PC-3 (cell line): ENCODE measurements at regions of chr3 and their contacts with region 1.

Region 1: GRCh38 chr3:9249273-9250192 is at the start of gene SRGAP3:
- DNase-seq: peak; percentile 97
- ATAC-seq: peak; percentile 93
- H3K4me3 ChIP-seq: peak within 1 kb of the TSS; percentile 77
- H3K27ac ChIP-seq: peak within 1 kb of the TSS; percentile 39
- H3K4me1 ChIP-seq: peaks cover 45% of the 10 kb centered on the region
- H3K27me3 ChIP-seq: no peaks in the 10 kb centered on the region
- CTCF ChIP-seq: peak; percentile 32; the same call in 1 of the 2 replicates
- total RNA-seq, gene SRGAP3: 7.5 and 9.6 TPM in 2 replicates

Region 2: DNA sequence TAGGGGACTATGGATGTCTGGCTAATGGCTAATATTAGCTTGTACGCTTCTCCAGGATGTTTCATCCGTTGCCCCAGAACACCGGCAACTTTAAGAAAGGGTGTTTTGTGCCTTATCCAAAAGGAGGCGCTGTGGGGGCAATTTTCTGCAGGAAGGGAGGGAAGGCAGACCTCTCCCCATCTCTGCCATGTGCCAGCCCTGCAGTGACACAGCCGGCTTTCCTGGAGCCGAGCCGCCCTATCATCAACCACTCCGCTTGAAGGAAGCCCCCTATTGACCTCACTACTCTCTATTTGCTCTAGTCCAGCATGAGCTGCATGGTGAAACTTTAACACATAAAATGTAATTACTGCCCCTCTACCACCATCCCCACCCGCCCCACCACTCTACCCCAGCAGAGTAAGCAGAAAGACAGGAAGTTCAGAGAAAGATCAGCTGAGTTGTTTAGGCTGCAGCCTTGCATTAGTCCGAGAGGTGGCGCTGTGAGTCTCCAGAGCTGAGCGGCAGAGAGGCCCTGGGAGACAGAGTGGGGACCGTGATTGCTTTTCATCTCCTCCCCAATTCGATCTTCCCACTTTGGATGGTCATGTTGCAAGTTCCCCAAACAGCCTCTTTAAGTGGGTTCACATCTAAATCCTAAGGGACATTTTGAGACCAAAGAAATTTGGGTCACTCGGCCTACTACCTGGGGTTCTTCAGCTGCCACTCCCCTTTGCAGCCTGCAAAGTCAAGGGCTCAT is 261.7 kb before region 1 on chr3:
- CTCF ChIA-PET with region 1: no interaction called
- POLR2A ChIA-PET with region 1: no interaction called
- intact Hi-C with region 1: loop called (anchors 1 kb)
- DNase-seq: peak; percentile 75
- ATAC-seq: peak; percentile 89
- H3K4me3 ChIP-seq: no peak overlapping the region
- H3K27ac ChIP-seq: no peak overlapping the region
- H3K4me1 ChIP-seq: no peaks in the 10 kb centered on the region
- H3K27me3 ChIP-seq: no peaks in the 10 kb centered on the region
- CTCF ChIP-seq: peak; percentile 95

Region 3: DNA sequence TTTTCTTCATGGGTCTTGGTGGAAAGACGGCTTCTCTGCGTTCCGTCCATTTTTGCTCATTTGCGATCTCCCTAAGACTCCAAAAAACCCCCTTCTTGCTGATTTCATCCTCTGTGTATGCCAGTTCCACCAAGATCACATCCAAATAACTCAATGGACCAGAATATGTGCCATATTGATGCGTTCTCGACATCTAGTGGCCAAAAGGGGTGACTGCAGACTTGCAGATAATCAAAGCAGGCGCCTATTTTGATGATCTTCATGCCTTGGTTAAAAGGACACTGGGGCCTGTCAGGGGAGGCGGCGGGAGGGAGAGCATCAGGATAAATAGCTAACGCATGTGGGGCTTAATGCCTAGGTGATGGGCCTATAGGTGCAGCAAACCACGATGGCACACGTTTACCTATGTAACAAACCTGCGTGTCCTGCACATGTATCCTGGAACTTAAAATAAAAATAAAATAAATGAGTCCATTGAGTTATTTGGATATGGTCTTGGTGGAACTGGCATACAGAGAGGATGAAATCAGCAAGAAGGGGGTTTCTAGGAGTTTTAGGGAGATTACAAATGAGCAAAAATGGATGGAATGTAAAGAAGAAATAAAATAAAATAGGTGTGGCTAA is 182.1 kb before region 1 on chr3:
- CTCF ChIA-PET with region 1: no interaction called
- POLR2A ChIA-PET with region 1: no interaction called
- intact Hi-C with region 1: loop called (anchors 5 kb)
- DNase-seq: peak; percentile 78
- ATAC-seq: peak; percentile 94
- H3K4me3 ChIP-seq: no peak overlapping the region
- H3K27ac ChIP-seq: no peak overlapping the region
- H3K4me1 ChIP-seq: no peaks in the 10 kb centered on the region
- H3K27me3 ChIP-seq: no peaks in the 10 kb centered on the region
- CTCF ChIP-seq: peak; percentile 97

Region 4: GRCh38 chr3:9194508-9195184 is 54.9 kb before region 1 on chr3:
- CTCF ChIA-PET with region 1: interaction called, 3 read pairs
- POLR2A ChIA-PET with region 1: no interaction called
- intact Hi-C with region 1: loop called (anchors 1 kb)
- DNase-seq: peak; percentile 83
- ATAC-seq: peak; percentile 94
- H3K4me3 ChIP-seq: no peak overlapping the region
- H3K27ac ChIP-seq: peak overlapping the region; percentile 64
- H3K4me1 ChIP-seq: peaks cover 21% of the 10 kb centered on the region
- H3K27me3 ChIP-seq: no peaks in the 10 kb centered on the region
- CTCF ChIP-seq: no peak

Region 5: DNA sequence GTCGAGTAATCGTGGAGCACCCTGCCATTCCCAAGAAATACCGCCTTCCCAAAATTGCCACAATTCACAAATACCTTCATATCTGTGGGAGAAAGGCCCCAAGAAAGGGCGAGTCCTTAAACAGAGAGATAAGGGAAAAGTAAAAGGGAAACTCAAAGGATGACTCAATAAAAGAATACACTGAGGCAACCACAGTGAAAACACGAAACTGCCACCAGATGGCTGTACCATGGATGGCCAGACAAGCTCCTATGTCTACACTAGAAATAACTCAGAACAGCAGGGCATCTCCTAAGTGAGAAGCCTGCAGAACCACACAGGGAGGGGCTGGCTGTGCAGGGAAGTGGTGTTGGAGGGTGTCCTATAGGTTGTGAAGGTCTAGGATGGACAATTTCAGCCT is 25.0 kb before region 1 on chr3:
- CTCF ChIA-PET with region 1: interaction called, 3 read pairs
- POLR2A ChIA-PET with region 1: interaction called, 6 read pairs
- intact Hi-C with region 1: loop called (anchors 1 kb)
- DNase-seq: peak; percentile 52
- ATAC-seq: peak; percentile 28
- H3K4me3 ChIP-seq: no peak overlapping the region
- H3K27ac ChIP-seq: no peak overlapping the region
- H3K4me1 ChIP-seq: peaks cover 37% of the 10 kb centered on the region
- H3K27me3 ChIP-seq: no peaks in the 10 kb centered on the region
- CTCF ChIP-seq: peak; percentile 48

Region 6: DNA sequence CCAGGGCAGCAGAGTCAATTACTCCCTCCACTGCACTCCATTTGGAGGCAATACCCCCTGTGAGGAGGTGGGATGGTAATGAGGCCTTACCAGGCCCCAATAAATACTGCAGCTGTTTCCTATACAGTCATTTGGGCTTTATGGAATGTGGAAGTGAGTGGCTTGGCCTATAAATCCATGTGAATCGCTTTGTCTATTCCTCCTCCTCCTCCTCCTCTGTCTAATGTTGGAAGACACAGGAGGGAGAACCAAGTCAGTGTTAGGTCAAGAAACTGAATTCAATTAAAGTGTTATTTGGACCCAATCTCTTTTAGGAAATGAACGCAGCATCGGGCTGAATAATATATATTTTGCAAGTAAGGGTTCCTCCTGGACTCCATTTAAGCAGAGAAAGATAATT is 17.2 kb after region 1 on chr3:
- CTCF ChIA-PET with region 1: no interaction called
- POLR2A ChIA-PET with region 1: no interaction called
- intact Hi-C with region 1: no loop called
- DNase-seq: no peak
- ATAC-seq: no peak
- H3K4me3 ChIP-seq: no peak overlapping the region
- H3K27ac ChIP-seq: no peak overlapping the region
- H3K4me1 ChIP-seq: no peaks in the 10 kb centered on the region
- H3K27me3 ChIP-seq: no peaks in the 10 kb centered on the region
- CTCF ChIP-seq: no peak

Region 7: DNA sequence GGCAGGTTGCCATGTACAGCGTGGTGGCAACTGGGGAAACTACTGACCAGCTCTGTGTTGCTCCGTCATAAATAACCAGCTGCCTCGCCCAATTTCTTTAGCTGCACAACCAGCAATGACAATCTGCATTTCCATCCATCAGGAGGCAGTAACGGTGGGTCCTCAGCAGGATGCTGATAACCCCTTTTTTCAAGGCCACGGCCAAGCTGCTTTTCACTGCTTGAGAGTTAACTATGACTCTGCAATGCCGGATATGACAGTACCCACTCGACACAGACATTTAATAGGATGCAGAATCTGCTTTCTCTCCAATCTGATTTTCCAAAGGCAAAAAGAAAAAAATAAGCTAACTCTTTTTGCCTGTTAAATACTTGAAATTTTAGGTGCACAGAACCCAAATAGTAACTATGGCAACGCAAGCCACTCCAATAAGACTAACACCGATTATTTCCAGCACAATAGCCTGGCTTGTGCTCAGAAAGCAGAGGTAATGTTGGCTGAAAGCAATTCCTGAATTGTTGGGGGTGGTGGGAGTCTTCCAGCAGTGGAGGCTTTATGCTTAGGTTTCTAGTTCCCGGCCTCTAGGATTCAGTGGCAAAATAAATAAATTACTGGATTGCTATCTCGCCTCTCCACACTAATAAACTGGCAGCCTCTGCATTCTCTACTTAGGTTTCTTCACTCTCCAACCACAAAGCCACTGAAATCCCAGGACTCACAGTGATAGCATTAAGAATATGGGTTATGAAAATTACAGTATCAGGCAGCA is 31.1 kb after region 1 on chr3:
- CTCF ChIA-PET with region 1: no interaction called
- POLR2A ChIA-PET with region 1: no interaction called
- intact Hi-C with region 1: no loop called
- DNase-seq: no peak
- ATAC-seq: no peak
- H3K4me3 ChIP-seq: no peak overlapping the region
- H3K27ac ChIP-seq: no peak overlapping the region
- H3K4me1 ChIP-seq: no peaks in the 10 kb centered on the region
- H3K27me3 ChIP-seq: no peaks in the 10 kb centered on the region
- CTCF ChIP-seq: no peak

Region 8: DNA sequence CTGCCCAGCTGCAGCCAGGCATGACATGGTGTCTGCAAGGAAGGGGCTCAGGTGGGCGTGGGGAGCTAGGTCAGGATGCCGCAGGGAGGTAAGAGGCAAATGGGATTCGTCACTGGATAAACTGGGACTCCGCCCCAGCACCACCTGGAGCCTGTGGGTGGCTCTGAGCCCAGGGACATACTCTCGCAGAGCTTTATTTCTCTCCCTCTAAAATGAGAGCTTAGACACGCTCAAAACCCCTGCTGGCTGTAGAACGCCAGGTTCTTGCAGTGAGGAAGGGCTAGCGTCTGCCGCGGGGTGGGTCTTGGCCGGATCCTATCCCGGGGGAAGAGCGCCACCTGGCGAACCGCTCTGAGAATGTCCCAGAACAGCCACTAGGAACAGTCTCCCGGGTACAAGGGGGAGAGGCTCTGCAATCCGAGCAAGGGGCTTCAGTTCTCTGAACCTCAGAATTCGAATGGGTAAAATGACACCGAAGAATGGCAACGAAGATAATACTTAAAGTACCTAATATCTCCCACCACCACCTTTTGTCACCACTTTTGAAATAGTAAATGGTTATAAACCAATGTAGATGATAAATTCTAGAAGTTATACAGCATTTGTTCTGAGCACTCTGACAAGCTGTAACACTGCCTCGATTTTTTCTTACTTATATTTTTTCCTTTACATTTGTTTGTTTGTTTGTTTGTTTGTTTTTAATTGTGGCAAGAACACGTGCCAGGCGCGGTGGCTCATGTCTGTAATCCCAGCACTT is 53.1 kb after region 1 on chr3:
- CTCF ChIA-PET with region 1: interaction called, 16 read pairs
- POLR2A ChIA-PET with region 1: no interaction called
- intact Hi-C with region 1: loop called (anchors 1 kb)
- DNase-seq: peak; percentile 95
- ATAC-seq: peak; percentile 94
- H3K4me3 ChIP-seq: peak overlapping the region; percentile 66
- H3K27ac ChIP-seq: peak overlapping the region; percentile 70
- H3K4me1 ChIP-seq: peaks cover 13% of the 10 kb centered on the region
- H3K27me3 ChIP-seq: no peaks in the 10 kb centered on the region
- CTCF ChIP-seq: peak; percentile 97